A549 (cell line): ENCODE measurements at regions of chr20 and their contacts with region 1.

Region 1: DNA sequence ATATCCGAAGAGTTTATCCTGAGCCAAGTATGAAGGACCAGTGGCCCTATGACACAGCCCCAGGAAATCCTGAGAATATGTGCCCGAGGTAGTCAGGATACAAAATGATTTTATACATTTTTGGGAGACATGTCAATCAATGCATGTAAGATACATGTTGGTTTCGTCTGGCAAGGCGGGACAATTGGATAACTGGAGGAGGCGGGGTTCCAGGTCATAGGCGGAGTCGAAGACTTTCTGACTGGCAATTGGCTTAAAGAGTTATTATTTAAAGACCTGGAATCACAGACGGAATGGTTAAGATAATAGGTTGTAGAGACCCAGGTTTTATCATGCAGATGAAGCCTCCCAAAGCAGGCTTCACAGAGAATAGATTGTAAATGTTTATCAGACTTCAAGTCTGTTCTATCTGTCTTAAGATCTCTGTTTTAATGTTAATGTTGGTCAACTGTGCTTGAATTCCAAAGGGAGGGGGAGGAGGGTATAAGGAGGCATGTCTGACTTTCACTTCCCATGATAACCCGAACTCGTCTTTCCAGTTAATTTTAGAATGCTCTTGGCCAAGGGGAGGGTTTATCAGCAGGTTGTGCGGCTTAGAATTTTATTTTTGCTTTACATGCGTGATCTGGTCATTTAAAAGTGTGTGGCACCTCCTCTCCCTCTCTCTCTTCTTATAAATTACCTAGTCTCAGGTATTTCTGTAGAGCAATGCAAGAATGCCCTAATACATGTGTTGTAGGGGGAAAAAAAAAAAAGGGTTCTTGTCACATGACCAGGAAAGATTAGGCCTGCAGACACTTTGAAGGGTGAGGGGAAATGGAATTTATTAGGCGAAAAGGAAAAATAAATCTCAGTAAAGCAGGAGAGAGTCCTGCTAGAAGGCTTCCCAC is 230.7 kb downstream of the NFATC2 start:
- DNase-seq: no peak
- ATAC-seq: no peak
- H3K4me3 ChIP-seq: no peak overlapping the region
- H3K27ac ChIP-seq: no peak overlapping the region
- H3K4me1 ChIP-seq: 0 out of 3 replicates have a peak, but pooled peaks cover 3% of the 10 kb centered on the region
- CTCF ChIP-seq: no peak
- EP300 ChIP-seq: no peak
- POLR2A ChIP-seq: no peak
- RAD21 ChIP-seq: no peak

Region 2: DNA sequence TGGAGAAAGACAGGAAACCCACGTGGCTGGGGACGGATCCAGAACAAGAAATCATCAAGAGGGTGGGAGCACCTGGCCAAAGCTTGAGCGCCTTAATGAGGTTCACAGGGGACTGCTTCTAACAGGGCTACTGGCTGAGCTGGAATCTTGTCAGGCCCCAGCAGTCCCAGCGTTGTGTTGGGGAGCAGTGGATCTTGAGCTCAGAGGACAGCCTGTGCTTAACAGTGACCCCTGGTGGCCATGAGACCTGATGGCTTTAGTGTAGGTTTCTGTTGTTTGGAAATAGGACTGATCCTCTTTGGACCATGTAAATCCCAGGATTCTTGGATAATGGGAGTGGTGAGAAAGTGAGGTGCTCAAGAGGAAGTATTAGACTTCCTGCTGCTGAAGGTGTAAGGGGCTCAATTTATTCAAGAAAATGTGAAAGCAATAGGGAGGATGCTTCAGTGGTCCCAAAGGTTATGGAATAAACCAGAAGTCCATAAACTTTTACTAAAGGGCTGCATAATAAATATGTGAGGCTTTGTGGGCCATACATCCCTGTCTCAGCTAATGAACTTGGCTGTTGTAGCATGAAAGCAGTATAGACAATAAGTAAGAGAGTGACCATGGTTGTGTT is 14.5 kb after region 1 on chr20:
- CTCF ChIA-PET with region 1: interaction called, 94 read pairs
- POLR2A ChIA-PET with region 1: no interaction called
- DNase-seq: peak; percentile 66 to 73
- ATAC-seq: peak; percentile 55 to 85; a peak in 3 of 6 replicates
- H3K4me3 ChIP-seq: no peak overlapping the region
- H3K27ac ChIP-seq: no peak overlapping the region
- H3K4me1 ChIP-seq: no peaks in the 10 kb centered on the region
- CTCF ChIP-seq: peak; percentile 54
- EP300 ChIP-seq: no peak
- POLR2A ChIP-seq: no peak
- RAD21 ChIP-seq: peak; percentile 38 to 42; a peak in 3 of 5 replicates